B cell (primary cell): ENCODE measurements at regions of chr20 and their contacts with region 1.

Region 1: DNA sequence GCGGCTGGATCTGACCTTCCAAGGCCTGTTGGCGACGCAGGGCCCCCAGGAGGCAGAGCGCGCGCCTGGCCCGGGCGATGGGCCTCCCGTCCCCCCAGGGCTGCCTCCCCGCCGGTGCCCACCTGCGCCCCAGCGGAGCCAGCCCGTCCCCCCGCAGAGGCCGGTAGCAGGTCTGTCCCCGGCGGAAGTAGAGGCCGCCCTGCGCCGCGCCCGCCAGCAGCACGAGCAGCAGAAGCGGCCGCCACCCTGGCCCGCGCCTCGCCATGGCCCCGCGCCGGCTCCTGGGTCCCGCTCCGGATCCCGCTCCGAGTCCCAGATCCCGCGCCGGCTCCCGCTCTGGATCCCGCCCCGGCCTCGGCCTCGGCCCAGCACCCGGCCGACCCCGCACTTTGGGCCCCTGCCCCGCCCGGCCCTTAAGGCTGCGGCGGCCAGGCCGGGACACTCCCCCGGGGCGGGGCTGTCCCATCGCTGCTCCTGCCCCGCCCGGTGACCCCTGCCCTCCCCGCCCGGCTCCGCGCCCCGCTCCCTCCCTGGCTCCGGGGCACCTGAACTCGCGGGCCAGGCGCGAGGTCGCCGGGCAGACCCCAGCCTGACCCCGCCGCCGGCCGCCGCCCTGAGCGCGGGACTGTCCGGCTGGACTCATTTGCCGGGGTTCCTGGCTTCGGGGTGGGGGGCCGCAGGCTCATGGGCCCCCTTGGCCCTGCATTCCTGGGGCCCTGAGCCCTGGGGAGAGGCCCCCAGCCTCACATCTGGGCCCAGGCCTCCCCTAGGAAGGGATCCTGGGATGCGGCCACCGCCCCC is at the start of gene CTSZ:
- DNase-seq: peak; percentile 60
- ATAC-seq: peak; percentile 23
- H3K4me3 ChIP-seq: peak within 1 kb of the TSS; percentile 79 to 91 (median 88)
- H3K4me3 Mint-ChIP-seq: peak within 1 kb of the TSS; percentile 98
- H3K27ac ChIP-seq: peak within 1 kb of the TSS; percentile 97
- H3K27ac Mint-ChIP-seq: peak within 1 kb of the TSS; percentile 99
- H3K4me1 ChIP-seq: peaks cover 45 to 65% of the 10 kb centered on the region in 2 donors
- H3K4me1 Mint-ChIP-seq: peaks cover 71% of the 10 kb centered on the region
- H3K27me3 ChIP-seq: no peaks in the 10 kb centered on the region
- H3K27me3 Mint-ChIP-seq: no peaks in the 10 kb centered on the region
- CTCF ChIP-seq: no peak
- total RNA-seq, gene CTSZ: 319 and 322 TPM in 2 replicates

Region 2: DNA sequence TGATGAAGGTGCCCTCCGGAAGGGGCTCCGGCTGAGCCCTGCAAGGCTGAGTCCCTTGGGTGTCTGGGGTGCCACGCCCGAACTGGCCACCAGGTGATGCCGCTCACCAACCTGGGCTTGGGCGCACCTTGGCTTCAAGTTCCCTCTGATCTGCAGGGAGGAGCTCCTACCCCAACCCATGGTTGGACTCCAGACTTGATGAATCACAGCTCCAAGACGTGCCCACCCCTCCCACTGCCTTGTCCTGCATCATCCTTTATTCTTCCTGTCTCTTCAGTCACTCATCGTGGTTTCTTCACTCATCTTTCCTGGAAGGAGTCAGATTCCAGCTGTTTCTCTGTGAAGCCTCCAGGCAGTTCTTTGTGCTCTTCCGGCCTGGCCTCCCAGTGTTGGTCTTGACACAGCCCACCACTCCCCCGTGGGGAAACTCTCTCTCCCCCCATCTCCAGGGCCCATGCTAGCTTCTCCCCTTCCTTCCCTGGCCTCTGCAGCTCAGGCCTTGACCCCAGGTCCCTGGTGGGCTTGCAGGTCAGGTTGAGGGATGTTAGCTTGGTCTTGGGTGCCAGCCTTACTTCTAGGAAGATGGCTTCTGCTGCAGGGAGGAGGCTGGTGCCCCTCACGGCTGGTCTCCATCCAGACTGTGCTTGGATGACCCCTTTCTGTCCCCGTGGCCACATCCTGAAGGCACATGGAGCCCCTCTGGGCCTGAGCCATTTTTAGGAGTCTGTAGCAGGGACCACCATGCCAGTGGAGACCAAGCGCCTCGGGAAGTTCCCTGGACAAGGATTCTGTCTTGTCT is 1384.3 kb before region 1 on chr20:
- CTCF ChIA-PET with region 1: no interaction called
- POLR2A ChIA-PET with region 1: interaction called, 3 read pairs
- intact Hi-C with region 1: loop called (anchors 5 kb)
- DNase-seq: peak; percentile 69
- ATAC-seq: no peak
- H3K4me3 ChIP-seq: no peak overlapping the region
- H3K4me3 Mint-ChIP-seq: peak overlapping the region; percentile 13
- H3K27ac ChIP-seq: no peak overlapping the region
- H3K27ac Mint-ChIP-seq: peak overlapping the region; percentile 80
- H3K4me1 ChIP-seq: peaks cover 54 to 59% of the 10 kb centered on the region in 2 donors
- H3K4me1 Mint-ChIP-seq: peaks cover 65% of the 10 kb centered on the region
- H3K27me3 ChIP-seq: no peaks in the 10 kb centered on the region
- H3K27me3 Mint-ChIP-seq: no peaks in the 10 kb centered on the region
- CTCF ChIP-seq: peak; percentile 82

Region 3: DNA sequence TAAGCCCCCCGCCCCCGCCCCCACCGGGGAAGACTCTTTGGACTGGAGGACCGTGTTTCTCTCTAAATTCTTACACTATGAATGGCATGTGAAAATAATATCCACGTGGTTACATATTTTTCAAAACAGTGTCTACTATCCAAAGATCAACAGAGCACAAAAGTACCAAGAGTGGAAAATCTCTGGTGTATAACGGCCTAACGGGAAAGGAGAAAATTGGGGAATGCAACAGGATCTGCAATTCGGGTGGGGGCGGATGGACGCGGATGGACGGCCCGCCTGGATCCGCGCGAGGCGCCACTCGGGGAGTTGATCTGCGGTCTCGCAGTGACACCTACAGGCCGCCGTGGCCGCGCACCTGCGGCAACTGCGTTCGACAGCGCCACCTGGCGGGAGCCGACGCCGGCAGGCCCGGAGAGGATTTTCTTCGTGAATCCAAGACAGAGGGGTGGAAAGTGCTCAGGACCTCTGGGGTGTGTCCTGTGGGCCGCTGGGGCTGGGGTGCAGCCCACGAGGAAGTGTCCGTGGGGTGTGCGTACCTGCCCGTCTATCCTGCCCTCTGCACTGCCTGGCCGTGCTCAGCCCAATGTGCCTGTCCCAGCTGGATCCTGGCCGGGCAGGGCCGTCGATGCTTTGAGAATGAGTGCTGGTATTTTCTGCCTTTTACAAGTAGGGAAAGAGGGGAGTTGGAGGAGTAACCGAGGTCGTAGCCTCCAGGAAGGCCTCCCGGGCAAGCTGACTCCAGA is 797.2 kb before region 1 on chr20:
- CTCF ChIA-PET with region 1: no interaction called
- POLR2A ChIA-PET with region 1: no interaction called
- intact Hi-C with region 1: no loop called
- DNase-seq: peak; percentile 88
- ATAC-seq: peak; percentile 89
- H3K4me3 ChIP-seq: no peak overlapping the region
- H3K4me3 Mint-ChIP-seq: peak overlapping the region; percentile 14
- H3K27ac ChIP-seq: no peak overlapping the region
- H3K27ac Mint-ChIP-seq: no peak overlapping the region
- H3K4me1 ChIP-seq: peaks cover 0 to 6% of the 10 kb centered on the region in 2 donors
- H3K4me1 Mint-ChIP-seq: peaks cover 3% of the 10 kb centered on the region
- H3K27me3 ChIP-seq: peaks cover 0 to 8% (median 2%) of the 10 kb centered on the region in 4 experiments
- H3K27me3 Mint-ChIP-seq: peaks cover 14% of the 10 kb centered on the region
- CTCF ChIP-seq: peak; percentile 100

Region 4: GRCh38 chr20:58864350-58864749 is 142.7 kb before region 1 on chr20:
- CTCF ChIA-PET with region 1: no interaction called
- POLR2A ChIA-PET with region 1: no interaction called
- intact Hi-C with region 1: no loop called
- DNase-seq: peak; percentile 48
- ATAC-seq: no peak
- H3K4me3 ChIP-seq: no peak overlapping the region
- H3K4me3 Mint-ChIP-seq: no peak overlapping the region
- H3K27ac ChIP-seq: no peak overlapping the region
- H3K27ac Mint-ChIP-seq: no peak overlapping the region
- H3K4me1 ChIP-seq: peaks cover 0 to 2% of the 10 kb centered on the region in 2 donors
- H3K4me1 Mint-ChIP-seq: no peaks in the 10 kb centered on the region
- H3K27me3 ChIP-seq: peaks cover 0 to 10% (median 3%) of the 10 kb centered on the region in 4 experiments
- H3K27me3 Mint-ChIP-seq: peaks cover 22% of the 10 kb centered on the region
- CTCF ChIP-seq: peak; percentile 55

Region 5: GRCh38 chr20:58918621-58919020 is 88.4 kb before region 1 on chr20:
- CTCF ChIA-PET with region 1: no interaction called
- POLR2A ChIA-PET with region 1: no interaction called
- intact Hi-C with region 1: no loop called
- DNase-seq: no peak
- ATAC-seq: no peak
- H3K4me3 ChIP-seq: no peak overlapping the region
- H3K4me3 Mint-ChIP-seq: no peak overlapping the region
- H3K27ac ChIP-seq: no peak overlapping the region
- H3K27ac Mint-ChIP-seq: no peak overlapping the region
- H3K4me1 ChIP-seq: no peaks in the 10 kb centered on the region
- H3K4me1 Mint-ChIP-seq: no peaks in the 10 kb centered on the region
- H3K27me3 ChIP-seq: no peaks in the 10 kb centered on the region
- H3K27me3 Mint-ChIP-seq: no peaks in the 10 kb centered on the region
- CTCF ChIP-seq: no peak

Region 6: DNA sequence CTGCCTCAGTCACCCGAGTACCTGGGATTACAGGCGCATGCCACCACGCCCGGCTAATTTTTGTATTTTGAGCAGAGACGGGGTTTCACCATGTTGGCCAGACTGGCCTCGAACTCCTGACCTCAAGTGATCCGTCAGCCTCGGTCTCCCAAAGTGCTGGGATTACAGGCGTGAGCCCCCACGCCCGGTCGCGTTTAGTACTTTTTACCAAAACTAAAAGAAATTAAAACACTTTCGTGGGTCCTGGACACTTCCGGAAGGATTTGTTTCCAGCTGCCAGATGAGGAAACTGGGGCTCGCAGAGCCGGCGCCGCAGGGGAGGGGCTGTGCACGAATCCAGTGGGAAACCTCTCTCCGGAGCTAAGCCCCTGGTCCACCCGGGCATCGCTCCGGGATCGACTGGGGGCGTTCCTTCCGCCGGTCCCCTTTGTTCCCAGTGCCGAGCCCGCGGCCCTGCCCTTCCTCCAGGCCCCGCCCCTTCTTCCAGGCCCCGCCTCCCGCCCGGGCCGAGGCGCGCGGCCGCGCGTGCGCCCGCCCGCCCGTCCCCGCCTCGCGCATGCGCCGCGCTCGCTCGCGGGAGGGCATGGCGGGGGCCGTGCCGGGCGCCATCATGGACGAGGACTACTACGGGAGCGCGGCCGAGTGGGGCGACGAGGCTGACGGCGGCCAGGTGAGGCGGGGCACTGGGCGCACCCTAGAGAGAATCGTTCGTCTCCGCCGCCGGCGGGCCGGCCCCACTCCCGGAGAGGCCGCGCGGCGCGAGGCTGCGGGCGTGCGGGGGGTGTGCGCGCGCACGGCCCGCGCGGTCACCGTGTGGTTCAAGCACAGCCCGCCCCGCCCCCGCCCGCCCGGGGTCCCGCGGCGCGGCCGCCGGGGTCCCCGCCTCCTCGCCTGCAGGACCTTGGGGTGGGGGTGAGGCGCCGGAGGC is 26.1 kb before region 1 on chr20 and contains the start of gene NELFCD:
- CTCF ChIA-PET with region 1: interaction called, 6 read pairs
- POLR2A ChIA-PET with region 1: no interaction called
- intact Hi-C with region 1: loop called (anchors 1 kb)
- DNase-seq: peak; percentile 93
- ATAC-seq: peak; percentile 93
- H3K4me3 ChIP-seq: peak within 1 kb of the TSS; percentile 79 to 91 (median 80)
- H3K4me3 Mint-ChIP-seq: peak within 1 kb of the TSS; percentile 96
- H3K27ac ChIP-seq: peak within 1 kb of the TSS; percentile 71 to 76
- H3K27ac Mint-ChIP-seq: peak within 1 kb of the TSS; percentile 94
- H3K4me1 ChIP-seq: peaks cover 24 to 47% of the 10 kb centered on the region in 2 donors
- H3K4me1 Mint-ChIP-seq: peaks cover 43% of the 10 kb centered on the region
- H3K27me3 ChIP-seq: no peaks in the 10 kb centered on the region
- H3K27me3 Mint-ChIP-seq: no peaks in the 10 kb centered on the region
- CTCF ChIP-seq: no peak
- total RNA-seq, gene NELFCD: 107 and 108 TPM in 2 replicates

Region 7: DNA sequence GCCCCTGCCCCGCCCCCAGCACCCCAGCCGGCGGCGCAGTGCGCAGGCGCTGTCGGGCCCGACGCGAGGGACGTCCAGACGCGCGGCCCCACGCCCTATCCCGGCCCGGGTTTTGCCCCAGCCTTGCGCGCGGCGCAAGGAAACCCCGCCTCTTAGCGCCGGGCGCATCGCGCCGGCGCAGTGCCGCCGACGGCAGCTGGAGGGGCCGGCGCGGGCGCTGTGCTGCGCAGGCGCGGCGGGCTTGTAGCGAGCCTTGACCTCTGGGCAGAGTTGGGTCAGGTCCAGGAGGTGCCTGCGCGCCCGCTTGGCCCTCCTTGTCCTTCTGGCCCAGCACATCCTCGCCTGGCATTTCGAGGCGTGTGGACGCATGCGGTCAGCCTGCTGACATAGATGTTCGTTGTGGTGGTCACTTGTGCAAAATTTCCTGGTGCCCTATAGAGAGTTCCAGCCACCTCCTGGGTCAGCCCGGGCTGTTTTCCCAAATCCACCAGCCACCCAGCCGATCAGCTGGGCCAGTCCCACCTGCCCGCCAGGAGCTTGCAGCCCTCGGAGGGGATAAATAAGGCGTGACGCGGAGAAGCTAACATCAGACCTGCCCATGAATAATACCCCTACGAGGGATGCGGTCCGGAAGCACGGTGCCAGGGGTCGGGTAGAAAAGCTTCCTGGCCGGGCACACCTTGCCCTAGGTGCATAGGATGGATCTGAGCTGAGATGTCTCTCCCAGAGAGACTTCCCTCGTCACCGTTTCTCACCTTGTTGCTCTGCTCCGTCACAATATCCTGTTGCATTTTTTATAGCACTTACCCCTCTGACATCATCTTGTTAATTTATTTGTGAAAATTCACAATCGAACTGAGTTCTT is 36.0 kb after region 1 on chr20:
- CTCF ChIA-PET with region 1: no interaction called
- POLR2A ChIA-PET with region 1: no interaction called
- intact Hi-C with region 1: loop called (anchors 1 kb)
- DNase-seq: peak; percentile 96
- ATAC-seq: peak; percentile 98
- H3K4me3 ChIP-seq: peak overlapping the region in 4 of 5 experiments; percentile 80 to 97 (median 86)
- H3K4me3 Mint-ChIP-seq: peak overlapping the region; percentile 94
- H3K27ac ChIP-seq: peak overlapping the region; percentile 69 to 89
- H3K27ac Mint-ChIP-seq: peak overlapping the region; percentile 93
- H3K4me1 ChIP-seq: peaks cover 45 to 47% of the 10 kb centered on the region in 2 donors
- H3K4me1 Mint-ChIP-seq: peaks cover 51% of the 10 kb centered on the region
- H3K27me3 ChIP-seq: no peaks in the 10 kb centered on the region
- H3K27me3 Mint-ChIP-seq: no peaks in the 10 kb centered on the region
- CTCF ChIP-seq: no peak

Region 8: DNA sequence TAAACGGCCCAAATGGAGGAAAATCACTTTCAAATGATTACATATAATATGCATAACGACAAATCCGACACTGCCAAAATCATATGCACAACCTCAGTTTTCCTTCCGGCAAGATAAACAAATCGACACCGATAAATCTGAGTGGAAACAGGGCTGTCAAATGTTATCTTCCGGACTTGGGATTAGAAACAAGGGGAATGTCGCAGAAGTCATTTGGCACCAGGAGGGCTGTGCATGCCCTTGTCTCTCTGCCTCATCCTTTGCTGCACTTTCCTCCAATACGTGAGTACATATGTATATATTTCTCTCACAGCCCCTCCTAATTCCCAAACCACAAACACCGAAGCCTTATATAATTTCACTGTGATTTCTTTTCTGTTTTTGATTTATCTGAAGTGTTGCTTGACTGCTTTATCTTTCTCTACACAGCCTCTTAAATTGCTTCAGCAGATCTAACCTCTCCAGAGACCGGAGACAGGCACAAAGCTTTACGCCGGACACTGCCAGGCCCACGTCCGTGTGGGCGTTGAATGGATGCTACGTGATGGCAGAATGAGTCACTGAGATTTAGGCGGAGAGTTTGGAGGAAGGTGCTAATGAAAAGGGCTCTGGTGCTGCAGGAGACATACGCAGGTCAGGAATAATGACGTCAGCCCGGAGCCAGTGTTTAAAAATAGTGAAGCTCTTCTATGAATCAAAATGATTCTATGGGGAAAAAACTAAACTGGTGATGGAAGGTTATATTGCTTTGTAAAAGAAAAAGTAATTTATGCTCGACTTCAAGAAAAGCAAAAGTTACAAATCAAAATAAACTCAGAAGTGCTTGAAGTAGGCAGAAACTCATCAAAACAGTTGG is 56.5 kb after region 1 on chr20:
- CTCF ChIA-PET with region 1: no interaction called
- POLR2A ChIA-PET with region 1: no interaction called
- intact Hi-C with region 1: no loop called
- DNase-seq: no peak
- ATAC-seq: no peak
- H3K4me3 ChIP-seq: no peak overlapping the region
- H3K4me3 Mint-ChIP-seq: no peak overlapping the region
- H3K27ac ChIP-seq: no peak overlapping the region
- H3K27ac Mint-ChIP-seq: no peak overlapping the region
- H3K4me1 ChIP-seq: no peaks in the 10 kb centered on the region
- H3K4me1 Mint-ChIP-seq: no peaks in the 10 kb centered on the region
- H3K27me3 ChIP-seq: peaks cover 0 to 4% (median 0%) of the 10 kb centered on the region in 4 experiments
- H3K27me3 Mint-ChIP-seq: peaks cover 29% of the 10 kb centered on the region
- CTCF ChIP-seq: no peak